ENCODE measurements at regions of chr7 and their contacts with region 1.

Region 1: DNA sequence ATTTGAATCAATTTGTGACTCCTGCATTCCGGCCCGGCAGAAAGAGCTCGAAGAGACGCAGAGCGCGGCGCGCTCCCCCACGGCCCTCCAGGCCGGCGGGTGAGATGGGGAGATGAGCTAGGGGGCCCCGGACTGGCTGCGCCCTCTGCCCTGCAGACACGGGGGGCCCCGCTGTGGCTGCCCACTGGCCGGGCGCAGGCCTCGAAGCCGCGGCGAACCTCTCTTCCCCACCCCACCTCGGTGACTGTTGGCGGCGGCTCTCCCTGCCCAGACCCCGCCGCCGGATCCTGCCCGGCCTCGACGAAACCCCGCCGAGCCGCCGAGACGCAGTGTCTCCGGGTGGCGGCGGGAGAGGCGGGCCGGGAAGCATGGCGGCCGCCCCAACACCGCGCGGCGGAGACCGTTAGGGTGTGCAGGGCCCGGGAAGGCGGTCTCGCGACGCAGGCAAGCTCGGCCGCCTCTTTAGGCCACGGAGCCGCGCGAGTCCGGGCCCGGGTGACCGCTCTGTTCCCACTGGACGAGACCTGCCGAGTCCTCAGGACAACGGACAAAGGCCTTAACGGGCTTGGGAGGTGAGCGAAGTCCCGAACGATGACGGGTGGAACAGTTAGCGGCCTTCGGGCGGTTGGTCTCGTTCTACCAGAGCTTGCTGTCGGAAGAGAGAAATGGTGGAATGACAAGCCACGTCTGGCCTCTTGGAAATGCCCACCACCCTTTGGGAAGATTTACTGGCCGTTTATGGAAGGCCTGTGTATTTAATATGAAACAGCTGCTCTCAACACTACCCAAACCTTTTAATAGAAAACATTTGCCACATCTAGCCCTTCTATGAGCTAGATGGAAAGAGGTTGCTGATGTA is 24.3 kb downstream of the NUP42 start:
- DNase-seq: no peak
- H3K4me3 ChIP-seq: no peak overlapping the region
- H3K4me3 Mint-ChIP-seq: no peak overlapping the region
- H3K27ac Mint-ChIP-seq: no peak overlapping the region
- H3K4me1 ChIP-seq: no peaks in the 10 kb centered on the region
- H3K4me1 Mint-ChIP-seq: peaks cover 8% of the 10 kb centered on the region
- H3K27me3 ChIP-seq: no peaks in the 10 kb centered on the region
- H3K27me3 Mint-ChIP-seq: no peaks in the 10 kb centered on the region
- CTCF ChIP-seq: no peak

Region 2: GRCh38 chr7:23622506-23622925 is 416.4 kb after region 1 on chr7:
- CTCF ChIA-PET with region 1: no interaction called
- POLR2A ChIA-PET with region 1: interaction called, 10 read pairs
- intact Hi-C with region 1: no loop called
- DNase-seq: peak in 1 of 2 experiments; percentile 31
- H3K4me3 ChIP-seq: no peak overlapping the region
- H3K4me3 Mint-ChIP-seq: no peak overlapping the region
- H3K27ac Mint-ChIP-seq: no peak overlapping the region
- H3K4me1 ChIP-seq: no peaks in the 10 kb centered on the region; the same call in 1 of the 2 replicates
- H3K4me1 Mint-ChIP-seq: no peaks in the 10 kb centered on the region
- H3K27me3 ChIP-seq: no peaks in the 10 kb centered on the region
- H3K27me3 Mint-ChIP-seq: no peaks in the 10 kb centered on the region
- CTCF ChIP-seq: no peak

Measured in Caco-2 (cell line).